HEK293 (cell line): ENCODE measurements at regions of chr7 and their contacts with region 1.

Region 1: GRCh38 chr7:147443942-147444341 is 1146.6 kb upstream of the C7orf33 start:
- H3K4me3 ChIP-seq: no peak overlapping the region
- H3K27ac ChIP-seq: no peak overlapping the region
- H3K4me1 ChIP-seq: no peaks in the 10 kb centered on the region
- CTCF ChIP-seq: no peak

Region 2: GRCh38 chr7:147298611-147299043 is 145.3 kb before region 1 on chr7:
- CTCF ChIA-PET with region 1: no interaction called
- POLR2A ChIA-PET with region 1: interaction called, 11 read pairs
- H3K4me3 ChIP-seq: no peak overlapping the region
- H3K27ac ChIP-seq: no peak overlapping the region
- H3K4me1 ChIP-seq: no peaks in the 10 kb centered on the region
- CTCF ChIP-seq: no peak

Region 3: GRCh38 chr7:147523056-147523455 is 79.1 kb after region 1 on chr7:
- CTCF ChIA-PET with region 1: no interaction called
- POLR2A ChIA-PET with region 1: no interaction called
- H3K4me3 ChIP-seq: no peak overlapping the region
- H3K27ac ChIP-seq: no peak overlapping the region
- H3K4me1 ChIP-seq: no peaks in the 10 kb centered on the region
- CTCF ChIP-seq: no peak